Cardiac septum (tissue), 1 donor: ENCODE measurements at regions of chr10 and their contacts with region 1.

Region 1: DNA sequence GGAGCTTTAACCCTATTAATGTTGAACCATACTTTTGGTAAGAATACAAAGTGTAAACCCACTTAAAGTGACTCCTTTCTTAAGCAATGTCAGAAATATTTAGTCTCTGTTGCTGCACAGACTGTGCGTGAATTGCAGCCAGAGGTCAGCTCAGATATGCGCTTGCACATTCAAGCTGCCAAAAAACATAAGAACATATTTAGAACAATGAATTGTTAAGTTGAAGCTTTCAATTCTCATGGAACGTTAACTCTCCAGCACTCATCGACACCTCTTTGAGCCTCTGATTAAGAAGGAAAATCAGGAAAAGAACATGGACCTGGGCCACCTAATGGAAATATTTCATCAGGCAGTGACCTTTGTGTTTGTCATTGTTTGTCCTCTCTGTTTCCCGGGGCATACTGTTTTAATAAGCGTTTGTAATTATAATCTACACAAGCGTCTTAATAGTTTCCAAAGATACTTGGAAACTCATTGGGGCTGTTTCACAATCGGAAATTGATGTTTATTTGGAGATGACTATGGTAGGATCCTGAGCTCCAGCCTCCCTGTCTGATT is 193.0 kb upstream of the CELF2 start:
- DNase-seq: no peak

Region 2: GRCh38 chr10:10872035-10872673 is 47.5 kb after region 1 on chr10:
- intact Hi-C with region 1: loop called (anchors 5 kb)
- DNase-seq: no peak